ENCODE measurements at regions of chr1 and their contacts with region 1.

Region 1: GRCh38 chr1:203572134-203572625 is 54.5 kb upstream of the ATP2B4 start:
- DNase-seq: peak; percentile 55
- ATAC-seq: peak; percentile 52
- H3K4me3 ChIP-seq: no peak overlapping the region
- H3K27ac ChIP-seq: no peak overlapping the region
- H3K4me1 ChIP-seq: peaks cover 20% of the 10 kb centered on the region
- H3K27me3 ChIP-seq: no peaks in the 10 kb centered on the region
- CTCF ChIP-seq: no peak
- POLR2A ChIP-seq: no peak
- RAD21 ChIP-seq: no peak

Region 2: DNA sequence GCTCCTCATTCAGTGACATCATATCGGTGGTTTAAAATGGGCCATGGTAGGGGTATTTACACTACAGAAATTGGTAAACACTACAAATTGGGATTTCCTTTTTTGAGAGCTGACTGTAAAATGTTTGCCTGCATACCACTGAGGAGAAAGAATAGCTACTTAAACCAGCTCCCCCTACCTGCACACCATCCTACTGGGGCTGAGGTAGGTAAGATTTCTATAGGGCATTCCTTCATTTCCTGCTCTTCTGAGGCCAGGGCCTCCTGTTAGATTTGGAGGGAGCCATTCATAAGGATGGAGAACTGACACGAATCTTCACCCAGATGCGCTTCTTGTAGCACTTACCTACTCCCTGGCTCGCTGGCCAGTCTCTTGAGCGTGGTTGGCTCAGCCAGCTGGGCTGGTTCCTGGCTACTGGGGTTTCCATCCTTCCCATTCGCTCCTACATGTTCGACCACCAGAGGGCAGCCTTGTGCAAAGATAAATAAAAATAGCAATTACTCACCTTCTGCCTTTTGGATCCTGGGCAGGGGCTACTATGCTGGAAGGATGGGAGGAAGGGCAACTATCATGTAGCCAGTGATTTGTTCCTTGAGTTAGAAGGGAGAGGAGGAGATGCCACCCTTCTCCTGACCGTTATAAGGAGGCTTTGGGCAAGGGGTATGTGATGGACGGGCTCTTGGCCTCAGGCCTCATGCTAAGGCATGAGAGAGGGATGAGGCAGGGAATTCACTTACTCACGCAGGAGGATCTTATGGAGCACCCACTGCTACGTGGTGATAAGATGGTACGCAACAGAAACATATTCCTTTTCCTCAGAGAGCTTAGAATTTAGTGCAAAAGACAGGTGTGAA is 67.6 kb before region 1 on chr1:
- CTCF ChIA-PET with region 1: no interaction called
- POLR2A ChIA-PET with region 1: no interaction called
- dilution Hi-C with region 1: no loop called
- in situ Hi-C with region 1: no loop called
- intact Hi-C with region 1: no loop called
- DNase-seq: peak; percentile 80
- ATAC-seq: peak; percentile 80
- H3K4me3 ChIP-seq: no peak overlapping the region
- H3K27ac ChIP-seq: no peak overlapping the region; the same call in 1 of the 2 replicates
- H3K4me1 ChIP-seq: peaks cover 28% of the 10 kb centered on the region
- H3K27me3 ChIP-seq: no peaks in the 10 kb centered on the region
- CTCF ChIP-seq: peak; percentile 83
- POLR2A ChIP-seq: peak; percentile 51; the same call in 1 of the 2 replicates
- RAD21 ChIP-seq: peak; percentile 89

Region 3: GRCh38 chr1:203609979-203610493 is 37.9 kb after region 1 on chr1:
- CTCF ChIA-PET with region 1: no interaction called
- POLR2A ChIA-PET with region 1: no interaction called
- dilution Hi-C with region 1: no loop called
- in situ Hi-C with region 1: no loop called
- intact Hi-C with region 1: loop called (anchors 5 kb)
- DNase-seq: no peak
- ATAC-seq: no peak
- H3K4me3 ChIP-seq: no peak overlapping the region
- H3K27ac ChIP-seq: no peak overlapping the region
- H3K4me1 ChIP-seq: peaks cover 15% of the 10 kb centered on the region
- H3K27me3 ChIP-seq: no peaks in the 10 kb centered on the region
- CTCF ChIP-seq: no peak
- POLR2A ChIP-seq: no peak
- RAD21 ChIP-seq: no peak

Region 4: DNA sequence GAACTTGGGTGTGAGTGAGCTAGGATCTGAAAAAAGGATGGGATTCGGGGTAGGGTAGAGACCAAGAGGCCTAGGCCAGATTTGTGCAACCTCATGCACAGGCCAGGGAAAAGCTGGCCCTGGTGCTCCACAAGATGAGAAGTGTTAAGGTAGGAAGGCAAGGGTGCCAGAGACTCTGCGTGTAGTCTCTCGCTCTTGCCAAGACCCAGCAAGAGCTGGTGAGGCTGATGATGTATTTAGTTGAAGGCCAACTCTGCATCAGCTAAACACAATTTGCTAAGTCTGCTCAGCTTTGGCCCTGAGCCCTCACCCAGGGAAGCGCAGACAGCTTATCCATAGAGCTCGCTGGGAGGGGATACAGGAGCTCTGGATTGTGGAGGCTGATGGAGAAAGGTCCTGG is 474.2 kb after region 1 on chr1:
- CTCF ChIA-PET with region 1: no interaction called
- POLR2A ChIA-PET with region 1: no interaction called
- dilution Hi-C with region 1: no loop called
- in situ Hi-C with region 1: no loop called
- intact Hi-C with region 1: no loop called
- DNase-seq: no peak
- ATAC-seq: no peak
- H3K4me3 ChIP-seq: no peak overlapping the region
- H3K27ac ChIP-seq: no peak overlapping the region
- H3K4me1 ChIP-seq: no peaks in the 10 kb centered on the region
- H3K27me3 ChIP-seq: peaks cover 19% of the 10 kb centered on the region; the same call in 1 of the 2 replicates
- CTCF ChIP-seq: no peak
- POLR2A ChIP-seq: no peak
- RAD21 ChIP-seq: no peak

Measured in IMR-90 (cell line).